ENCODE measurements at regions of chr1 and their contacts with region 1.

Region 1: GRCh38 chr1:27525296-27526272 is 35.6 kb upstream of the WASF2 start:
- DNase-seq: peak; percentile 86
- ATAC-seq: peak; percentile 57
- H3K4me3 Mint-ChIP-seq: peak overlapping the region; percentile 97
- H3K27ac Mint-ChIP-seq: peak overlapping the region; percentile 96
- H3K4me1 Mint-ChIP-seq: peaks cover 51% of the 10 kb centered on the region
- H3K27me3 Mint-ChIP-seq: no peaks in the 10 kb centered on the region
- CTCF ChIP-seq: no peak

Region 2: GRCh38 chr1:27402349-27402754 is 123.2 kb before region 1 on chr1:
- CTCF ChIA-PET with region 1: interaction called, 10 read pairs
- POLR2A ChIA-PET with region 1: interaction called, 3 read pairs
- intact Hi-C with region 1: no loop called
- DNase-seq: no peak
- ATAC-seq: no peak
- H3K4me3 Mint-ChIP-seq: no peak overlapping the region
- H3K27ac Mint-ChIP-seq: peak overlapping the region; percentile 83
- H3K4me1 Mint-ChIP-seq: peaks cover 24% of the 10 kb centered on the region
- H3K27me3 Mint-ChIP-seq: no peaks in the 10 kb centered on the region
- CTCF ChIP-seq: no peak

Region 3: GRCh38 chr1:27416387-27417111 is 109.0 kb before region 1 on chr1:
- CTCF ChIA-PET with region 1: interaction called, 13 read pairs
- POLR2A ChIA-PET with region 1: interaction called, 12 read pairs
- intact Hi-C with region 1: loop called (anchors 5 kb)
- DNase-seq: peak; percentile 71
- ATAC-seq: peak; percentile 49
- H3K4me3 Mint-ChIP-seq: no peak overlapping the region
- H3K27ac Mint-ChIP-seq: peak overlapping the region; percentile 7
- H3K4me1 Mint-ChIP-seq: peaks cover 34% of the 10 kb centered on the region
- H3K27me3 Mint-ChIP-seq: no peaks in the 10 kb centered on the region
- CTCF ChIP-seq: peak; percentile 64

Region 4: GRCh38 chr1:27445177-27445936 is 80.2 kb before region 1 on chr1:
- CTCF ChIA-PET with region 1: interaction called, 3 read pairs
- POLR2A ChIA-PET with region 1: interaction called, 5 read pairs
- intact Hi-C with region 1: loop called (anchors 5 kb)
- DNase-seq: no peak
- ATAC-seq: peak; percentile 84
- H3K4me3 Mint-ChIP-seq: peak overlapping the region; percentile 66
- H3K27ac Mint-ChIP-seq: peak overlapping the region; percentile 97
- H3K4me1 Mint-ChIP-seq: peaks cover 55% of the 10 kb centered on the region
- H3K27me3 Mint-ChIP-seq: no peaks in the 10 kb centered on the region
- CTCF ChIP-seq: no peak

Region 5: GRCh38 chr1:27489910-27490741 is 35.5 kb before region 1 on chr1 and contains the start of gene WASF2:
- CTCF ChIA-PET with region 1: interaction called, 4 read pairs
- POLR2A ChIA-PET with region 1: interaction called, 13 read pairs
- intact Hi-C with region 1: loop called (anchors 5 kb)
- DNase-seq: peak; percentile 98
- ATAC-seq: peak; percentile 96
- H3K4me3 Mint-ChIP-seq: peak within 1 kb of the TSS; percentile 99
- H3K27ac Mint-ChIP-seq: peak within 1 kb of the TSS; percentile 100
- H3K4me1 Mint-ChIP-seq: peaks cover 28% of the 10 kb centered on the region
- H3K27me3 Mint-ChIP-seq: no peaks in the 10 kb centered on the region
- CTCF ChIP-seq: no peak
- total RNA-seq, gene WASF2: 108 to 111 TPM

Region 6: DNA sequence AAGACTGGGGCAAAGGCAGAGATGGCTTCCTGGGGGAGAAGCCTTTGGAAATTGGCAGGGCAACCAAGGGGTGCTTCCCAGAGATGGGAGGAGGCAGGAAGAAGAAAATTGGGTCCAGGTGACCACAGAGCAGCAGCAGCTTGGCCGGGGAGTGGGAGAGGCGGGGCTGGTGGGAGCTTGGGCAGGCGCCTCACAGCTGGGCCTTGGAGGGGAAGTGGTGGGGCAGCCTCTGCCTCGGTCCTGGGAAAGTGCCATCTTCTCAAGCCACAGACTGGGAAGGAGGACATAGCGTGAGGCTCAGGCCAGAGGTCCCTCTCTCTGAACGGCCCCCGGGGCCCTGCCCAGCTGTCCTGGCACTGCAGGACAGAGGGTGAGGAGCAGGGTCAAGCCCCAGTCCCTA is 11.6 kb before region 1 on chr1:
- CTCF ChIA-PET with region 1: no interaction called
- POLR2A ChIA-PET with region 1: interaction called, 21 read pairs
- intact Hi-C with region 1: no loop called
- DNase-seq: no peak
- ATAC-seq: no peak
- H3K4me3 Mint-ChIP-seq: no peak overlapping the region
- H3K27ac Mint-ChIP-seq: no peak overlapping the region
- H3K4me1 Mint-ChIP-seq: peaks cover 20% of the 10 kb centered on the region
- H3K27me3 Mint-ChIP-seq: no peaks in the 10 kb centered on the region
- CTCF ChIP-seq: no peak

Region 7: DNA sequence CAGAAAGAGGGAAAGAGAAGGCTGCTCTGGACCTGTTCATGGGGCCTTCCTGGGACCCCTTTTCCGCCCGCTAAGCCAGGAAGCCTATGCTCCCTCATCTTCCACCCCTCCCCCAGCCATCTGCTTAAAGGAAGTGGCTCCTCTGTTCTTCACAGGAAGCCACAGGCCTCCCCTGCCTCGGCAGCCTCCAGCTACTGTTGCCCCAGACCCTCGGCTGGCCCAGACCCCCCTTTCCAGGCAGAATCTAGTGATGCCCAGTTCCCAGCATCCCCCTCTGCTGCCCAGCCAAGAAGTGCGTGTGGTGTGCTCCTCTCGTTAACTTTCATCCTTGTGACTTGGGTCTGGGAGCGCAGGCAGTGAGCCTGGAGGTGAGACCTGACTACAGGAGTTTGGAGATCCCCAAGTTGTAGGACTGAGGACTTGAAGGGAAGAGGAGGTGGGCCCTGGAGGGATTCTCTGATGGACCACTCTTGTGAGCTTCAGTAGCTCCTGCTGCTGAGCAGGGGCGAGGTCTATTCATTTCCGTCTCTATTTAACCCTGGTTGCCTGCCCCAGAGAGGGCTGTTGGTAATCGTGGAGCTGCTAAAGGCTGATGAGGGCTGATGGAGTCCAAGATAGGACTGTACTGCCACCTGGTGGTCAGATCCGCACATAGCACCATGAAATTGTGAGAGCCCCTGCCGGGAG is 137.3 kb after region 1 on chr1:
- CTCF ChIA-PET with region 1: interaction called, 4 read pairs
- POLR2A ChIA-PET with region 1: interaction called, 7 read pairs
- intact Hi-C with region 1: loop called (anchors 10 kb)
- DNase-seq: peak; percentile 96
- ATAC-seq: peak; percentile 80
- H3K4me3 Mint-ChIP-seq: peak overlapping the region; percentile 68
- H3K27ac Mint-ChIP-seq: peak overlapping the region; percentile 98
- H3K4me1 Mint-ChIP-seq: peaks cover 50% of the 10 kb centered on the region
- H3K27me3 Mint-ChIP-seq: no peaks in the 10 kb centered on the region
- CTCF ChIP-seq: peak; percentile 75

Measured in activated CD8-positive, alpha-beta T cell treated with anti-CD3 and anti-CD28 coated beads for 36 hours (primary cell).